ENCODE measurements at regions of chr17 and their contacts with region 1.

Region 1: DNA sequence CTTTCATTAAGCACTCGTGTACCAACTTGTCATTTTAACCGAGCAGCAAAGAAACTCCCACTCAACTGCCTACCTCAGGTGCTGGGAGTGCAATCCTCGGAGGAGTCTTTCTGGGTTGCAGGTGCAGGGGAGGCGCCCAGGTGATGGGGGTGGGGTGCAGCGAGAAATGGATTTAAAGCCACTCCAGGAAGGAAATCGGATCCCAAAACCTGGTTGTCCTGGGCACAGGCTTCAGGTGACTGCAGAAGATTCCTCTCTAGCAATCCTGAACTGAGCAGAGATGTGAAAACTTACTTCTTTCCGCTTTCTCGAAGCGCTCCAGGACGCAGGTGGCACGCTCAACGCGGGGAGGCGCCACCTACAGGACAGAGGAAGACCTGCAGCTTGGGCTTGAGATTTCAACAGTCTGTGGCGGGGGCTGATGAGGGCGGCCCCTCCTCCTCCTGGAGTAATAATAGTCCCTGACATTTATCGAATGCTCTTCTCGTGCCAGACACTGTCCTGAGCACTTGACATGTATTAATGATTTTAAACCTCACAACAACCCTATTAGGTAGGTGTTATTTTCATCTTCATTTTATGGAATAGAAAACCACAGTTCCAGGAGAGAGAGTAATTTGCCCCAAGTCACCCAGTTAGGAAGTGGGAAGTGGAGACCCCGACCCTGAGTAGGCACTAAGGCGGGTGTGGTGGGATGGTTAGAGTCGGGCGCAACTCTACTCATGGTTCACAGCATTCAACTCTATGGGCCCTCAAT is 27.2 kb upstream of the SKAP1 start:
- DNase-seq: peak; percentile 67 to 93
- ATAC-seq: peak; percentile 88 to 90 (median 90)
- H3K4me3 ChIP-seq: no peak overlapping the region
- H3K4me3 Mint-ChIP-seq: peak overlapping the region; percentile 72
- H3K27ac ChIP-seq: no peak overlapping the region
- H3K27ac Mint-ChIP-seq: peak overlapping the region; percentile 87 to 91
- H3K4me1 ChIP-seq: peaks cover 52% of the 10 kb centered on the region
- H3K4me1 Mint-ChIP-seq: peaks cover 49 to 50% of the 10 kb centered on the region in 2 donors
- H3K27me3 ChIP-seq: no peaks in the 10 kb centered on the region
- H3K27me3 Mint-ChIP-seq: no peaks in the 10 kb centered on the region
- CTCF ChIP-seq: peak; percentile 98

Region 2: DNA sequence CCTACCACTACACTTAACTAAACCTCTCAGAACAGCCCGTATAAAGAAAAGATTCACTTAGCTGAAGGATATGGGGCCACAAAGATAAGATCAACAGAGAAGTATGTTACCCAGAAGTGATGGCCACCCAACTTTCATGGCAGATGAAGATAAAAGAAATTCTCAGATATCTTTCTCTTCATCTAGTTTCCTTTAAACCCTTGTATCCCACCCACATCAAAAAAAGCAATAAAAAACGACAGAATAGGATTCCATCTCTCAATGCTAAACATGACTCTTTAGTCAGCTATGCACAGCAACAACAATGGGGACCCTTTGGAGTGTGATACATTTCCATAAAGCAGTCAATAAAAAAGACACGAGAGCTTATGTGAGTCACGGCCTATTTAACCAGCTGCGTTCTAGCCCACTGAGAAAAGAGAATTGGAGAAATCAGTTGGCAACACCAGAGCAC is 263.1 kb before region 1 on chr17:
- intact Hi-C with region 1: no loop called
- DNase-seq: peak in 1 of 2 donors; percentile 25
- ATAC-seq: no peak
- H3K4me3 ChIP-seq: no peak overlapping the region
- H3K4me3 Mint-ChIP-seq: no peak overlapping the region
- H3K27ac ChIP-seq: no peak overlapping the region
- H3K27ac Mint-ChIP-seq: peak overlapping the region; percentile 30 to 51
- H3K4me1 ChIP-seq: no peaks in the 10 kb centered on the region
- H3K4me1 Mint-ChIP-seq: peaks cover 42 to 52% of the 10 kb centered on the region in 2 donors
- H3K27me3 ChIP-seq: no peaks in the 10 kb centered on the region
- H3K27me3 Mint-ChIP-seq: no peaks in the 10 kb centered on the region
- CTCF ChIP-seq: no peak

Region 3: GRCh38 chr17:48351831-48352332 is 105.4 kb before region 1 on chr17:
- intact Hi-C with region 1: loop called (anchors 1 kb)
- DNase-seq: peak in 1 of 2 donors; percentile 72
- ATAC-seq: peak; percentile 52 to 84 (median 69)
- H3K4me3 ChIP-seq: no peak overlapping the region
- H3K4me3 Mint-ChIP-seq: no peak overlapping the region
- H3K27ac ChIP-seq: no peak overlapping the region
- H3K27ac Mint-ChIP-seq: peak overlapping the region; percentile 27 to 51
- H3K4me1 ChIP-seq: no peaks in the 10 kb centered on the region
- H3K4me1 Mint-ChIP-seq: peaks cover 7 to 18% of the 10 kb centered on the region in 2 donors
- H3K27me3 ChIP-seq: no peaks in the 10 kb centered on the region
- H3K27me3 Mint-ChIP-seq: no peaks in the 10 kb centered on the region
- CTCF ChIP-seq: peak; percentile 80

Region 4: DNA sequence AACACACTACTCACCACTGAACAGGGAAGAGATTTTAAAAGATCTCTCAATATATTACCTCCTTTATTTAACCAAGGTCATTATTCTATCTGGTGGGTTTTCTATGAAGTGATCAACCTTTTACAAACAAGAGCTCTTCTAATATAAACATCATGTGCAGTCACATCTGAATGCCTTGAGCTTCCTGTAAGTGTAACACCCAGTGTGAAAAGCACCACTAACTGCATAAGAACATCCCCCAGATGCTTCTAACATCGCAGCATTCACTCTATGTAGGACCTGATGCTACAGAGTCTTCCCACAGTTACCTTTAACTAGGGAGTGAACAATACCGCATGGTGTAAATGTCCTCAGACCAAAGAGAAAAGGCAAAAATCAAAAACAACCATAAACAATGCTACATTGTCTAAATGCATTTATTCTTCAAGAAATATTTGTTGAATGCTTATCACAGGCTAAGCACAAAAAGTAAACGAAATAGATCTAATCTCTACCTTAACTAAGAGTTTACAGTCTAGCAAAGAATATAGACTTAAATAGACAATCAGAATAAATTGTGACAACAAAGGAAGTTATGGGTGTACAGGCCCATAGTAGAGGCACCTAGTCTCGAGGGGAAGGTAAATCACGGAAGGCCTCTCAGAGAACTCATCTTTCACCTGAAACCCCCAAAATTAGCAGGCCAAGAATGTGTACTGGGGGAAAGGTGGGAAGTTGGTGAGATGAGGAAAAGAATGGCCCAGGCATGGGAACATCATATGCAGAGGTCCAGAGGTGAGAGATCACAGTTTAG is 43.4 kb before region 1 on chr17:
- intact Hi-C with region 1: loop called (anchors 1 kb)
- DNase-seq: peak in 1 of 2 donors; percentile 57
- ATAC-seq: peak; percentile 83 to 91 (median 90)
- H3K4me3 ChIP-seq: no peak overlapping the region
- H3K4me3 Mint-ChIP-seq: peak overlapping the region; percentile 82
- H3K27ac ChIP-seq: peak overlapping the region; percentile 74
- H3K27ac Mint-ChIP-seq: peak overlapping the region; percentile 87 to 95
- H3K4me1 ChIP-seq: peaks cover 29% of the 10 kb centered on the region
- H3K4me1 Mint-ChIP-seq: peaks cover 60 to 69% of the 10 kb centered on the region in 2 donors
- H3K27me3 ChIP-seq: no peaks in the 10 kb centered on the region
- H3K27me3 Mint-ChIP-seq: no peaks in the 10 kb centered on the region
- CTCF ChIP-seq: no peak

Region 5: DNA sequence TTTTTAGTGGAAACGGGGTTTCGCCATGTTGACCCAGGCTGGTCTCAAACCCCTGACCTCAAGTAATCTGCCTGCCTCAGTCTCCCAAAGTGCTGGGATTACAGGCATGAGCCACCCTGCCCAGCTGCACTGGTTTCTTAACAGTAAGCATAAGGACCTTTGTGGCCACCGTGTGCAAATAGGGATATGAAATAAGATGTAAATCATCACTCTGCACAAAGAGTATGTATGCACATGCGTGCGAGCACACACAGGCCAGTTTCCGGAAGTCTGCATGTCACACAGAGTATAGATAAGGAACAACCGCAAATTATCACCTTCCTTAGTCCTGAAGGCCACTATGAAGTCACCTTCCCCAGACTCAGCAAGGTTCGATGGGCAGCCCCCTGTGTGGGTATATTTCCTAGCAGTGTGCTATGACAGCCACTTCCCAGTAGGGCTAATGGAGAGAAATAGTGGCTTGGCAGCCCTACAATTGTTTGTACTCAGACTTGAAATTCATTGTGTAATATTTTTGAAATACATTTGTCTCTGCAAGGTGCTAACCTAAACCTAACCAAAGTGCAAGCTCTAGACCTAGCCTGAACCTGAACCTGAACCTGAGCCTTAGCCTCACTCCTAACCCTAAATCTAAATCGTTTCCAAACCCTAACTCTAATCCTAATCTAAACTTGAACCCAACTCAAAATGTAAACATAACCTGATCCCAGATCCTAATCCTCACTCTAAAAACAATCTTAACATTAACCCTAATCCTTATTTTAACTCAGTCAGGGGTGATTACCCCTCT is 21.2 kb after region 1 on chr17:
- intact Hi-C with region 1: no loop called
- DNase-seq: peak; percentile 51 to 70
- ATAC-seq: peak; percentile 90 to 93 (median 91)
- H3K4me3 ChIP-seq: no peak overlapping the region
- H3K4me3 Mint-ChIP-seq: peak overlapping the region; percentile 56
- H3K27ac ChIP-seq: peak overlapping the region; percentile 39
- H3K27ac Mint-ChIP-seq: peak overlapping the region; percentile 77 to 90
- H3K4me1 ChIP-seq: peaks cover 25% of the 10 kb centered on the region
- H3K4me1 Mint-ChIP-seq: peaks cover 24 to 53% of the 10 kb centered on the region in 2 donors
- H3K27me3 ChIP-seq: no peaks in the 10 kb centered on the region
- H3K27me3 Mint-ChIP-seq: no peaks in the 10 kb centered on the region
- CTCF ChIP-seq: no peak